Psoas muscle (tissue), 8 donors: ENCODE measurements at regions of chr1 and their contacts with region 1.

Region 1: GRCh38 chr1:236568285-236568894 is 35.9 kb downstream of the HEATR1 start:
- DNase-seq: no peak
- ATAC-seq: no peak
- H3K4me3 ChIP-seq: no peak overlapping the region
- H3K27ac ChIP-seq: no peak overlapping the region
- H3K4me1 ChIP-seq: no peaks in the 10 kb centered on the region
- H3K27me3 ChIP-seq: no peaks in the 10 kb centered on the region
- CTCF ChIP-seq: no peak

Region 2: DNA sequence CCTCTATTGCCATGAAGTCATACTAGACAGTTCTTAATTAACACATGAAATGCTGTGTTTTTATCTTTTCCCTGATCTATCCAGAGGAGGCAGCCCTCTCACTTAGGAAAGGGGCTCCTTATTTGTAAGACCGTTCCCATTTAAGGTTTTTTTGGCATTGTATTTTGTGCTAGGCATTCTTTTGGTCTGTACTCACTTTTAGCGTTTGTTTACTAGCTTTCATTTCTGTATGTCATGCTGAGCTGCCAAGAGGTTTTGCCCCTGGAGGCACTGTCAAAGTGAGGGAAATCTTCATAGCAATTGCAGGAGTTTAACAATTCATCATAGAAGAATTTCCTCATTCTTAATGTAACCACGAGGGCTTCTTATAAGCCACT is 286.2 kb after region 1 on chr1:
- intact Hi-C with region 1: loop called in 1 of 2 experiments (anchors 10 kb)
- DNase-seq: no peak
- ATAC-seq: no peak
- H3K4me3 ChIP-seq: no peak overlapping the region
- H3K27ac ChIP-seq: no peak overlapping the region
- H3K4me1 ChIP-seq: no peaks in the 10 kb centered on the region
- H3K27me3 ChIP-seq: no peaks in the 10 kb centered on the region
- CTCF ChIP-seq: no peak